Right ventricle myocardium inferior (tissue), 1 donor: ENCODE measurements at regions of chr12 and their contacts with region 1.

Region 1: GRCh38 chr12:119208622-119209061 is 29.9 kb downstream of the HSPB8 start:
- DNase-seq: peak; percentile 92
- ATAC-seq: peak; percentile 93

Region 2: GRCh38 chr12:119025786-119026185 is 182.9 kb before region 1 on chr12:
- intact Hi-C with region 1: no loop called
- DNase-seq: no peak
- ATAC-seq: no peak

Region 3: DNA sequence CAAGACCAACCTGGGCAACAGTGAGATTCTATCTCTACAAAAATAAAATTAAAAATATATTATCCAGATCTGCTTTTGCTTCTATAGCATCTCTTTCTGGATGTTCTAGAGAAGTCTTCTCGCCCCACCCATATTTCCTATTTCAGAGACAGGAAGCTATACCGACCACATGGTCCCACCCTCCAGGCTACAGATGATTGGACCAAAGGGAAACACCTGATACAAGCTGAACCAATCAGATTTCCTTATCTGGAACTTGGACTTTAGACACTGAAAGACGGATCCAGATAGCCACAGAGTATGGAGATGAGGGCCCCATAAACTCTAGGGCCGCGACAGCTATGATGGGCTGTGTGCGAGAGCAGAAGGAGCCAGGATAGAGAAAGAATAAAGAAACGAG is 174.6 kb after region 1 on chr12:
- intact Hi-C with region 1: loop called (anchors 5 kb)
- DNase-seq: no peak
- ATAC-seq: no peak